OCI-LY7 (cell line): ENCODE measurements at regions of chr12 and their contacts with region 1.

Region 1: GRCh38 chr12:101719546-101719945 is 19.7 kb downstream of the SYCP3 start:
- DNase-seq: no peak
- H3K4me3 ChIP-seq: no peak overlapping the region
- H3K27ac ChIP-seq: no peak overlapping the region
- H3K4me1 ChIP-seq: peaks cover 4% of the 10 kb centered on the region
- CTCF ChIP-seq: no peak

Region 2: DNA sequence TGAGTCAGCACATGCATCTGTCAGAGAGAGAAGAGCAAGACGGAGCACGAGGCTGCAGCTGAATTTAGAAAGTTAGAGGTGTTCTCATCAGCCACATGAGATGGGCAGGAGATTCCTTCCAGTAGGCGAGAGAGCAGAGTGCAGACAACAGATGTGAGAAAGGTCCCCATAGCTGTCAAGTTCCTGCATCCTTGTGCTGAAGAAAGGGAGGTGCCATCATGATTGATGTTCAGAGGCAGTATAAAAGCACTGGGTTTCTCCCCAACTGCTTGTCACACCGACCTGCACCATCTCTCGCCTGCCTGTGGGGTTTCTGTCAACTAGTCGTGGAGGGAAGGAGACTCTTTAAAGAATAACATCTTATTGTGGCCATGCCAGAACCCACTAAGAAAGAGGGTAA is 124.8 kb before region 1 on chr12 and contains the start of gene MYBPC1:
- CTCF ChIA-PET with region 1: no interaction called
- POLR2A ChIA-PET with region 1: no interaction called
- intact Hi-C with region 1: no loop called
- DNase-seq: peak; percentile 34
- H3K4me3 ChIP-seq: no peak within 1 kb of the TSS
- H3K27ac ChIP-seq: no peak within 1 kb of the TSS
- H3K4me1 ChIP-seq: peaks cover 7% of the 10 kb centered on the region
- CTCF ChIP-seq: no peak
- total RNA-seq, gene MYBPC1: not detected in 2 replicates

Region 3: DNA sequence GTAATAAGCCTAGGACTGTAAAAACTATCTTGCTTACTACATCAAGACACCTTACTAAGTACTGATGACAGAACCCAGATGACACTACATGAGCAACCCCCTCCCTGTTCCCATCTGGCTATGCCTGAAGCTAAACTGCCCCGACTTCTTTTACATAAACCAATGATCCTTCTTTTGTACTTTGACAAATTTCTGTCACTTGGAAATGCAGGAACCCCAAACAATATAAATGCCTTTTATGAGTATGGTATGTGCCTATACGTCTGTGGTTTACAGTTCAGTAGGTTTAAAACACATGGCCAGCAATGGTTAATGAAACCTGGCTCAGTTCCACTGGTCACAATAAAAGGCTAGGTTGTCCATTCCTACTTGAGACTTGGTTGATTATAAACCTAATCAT is 13.6 kb after region 1 on chr12:
- CTCF ChIA-PET with region 1: no interaction called
- POLR2A ChIA-PET with region 1: interaction called, 11 read pairs
- intact Hi-C with region 1: no loop called
- DNase-seq: no peak
- H3K4me3 ChIP-seq: no peak overlapping the region
- H3K27ac ChIP-seq: no peak overlapping the region
- H3K4me1 ChIP-seq: peaks cover 8% of the 10 kb centered on the region
- CTCF ChIP-seq: no peak